GM10248 (cell line): ENCODE measurements at regions of chr17 and their contacts with region 1.

Region 1: DNA sequence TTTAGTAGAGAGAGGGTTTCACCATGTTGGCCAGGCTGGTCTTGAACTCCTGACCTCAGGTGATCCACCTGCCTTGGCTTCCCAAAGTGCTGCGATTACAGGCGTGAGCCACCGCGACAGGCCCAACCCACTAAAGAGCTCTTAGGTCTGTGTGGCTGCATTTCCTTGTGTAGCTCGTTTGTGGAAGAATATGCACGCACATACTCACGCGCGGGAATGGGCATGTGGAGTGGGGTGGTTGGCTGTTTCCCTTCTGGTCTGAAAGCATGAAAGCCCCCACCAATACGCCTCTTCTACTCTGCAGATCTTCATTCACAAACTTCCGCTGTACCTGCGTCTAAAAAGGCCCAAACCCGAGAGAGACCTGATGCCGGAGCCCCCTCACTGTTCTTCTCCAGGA is 10.1 kb downstream of the CHRNB1 start:
- DNase-seq: no peak
- CTCF ChIP-seq: no peak

Region 2: GRCh38 chr17:7435221-7435675 is 19.7 kb before region 1 on chr17 and contains the start of gene TMEM102:
- CTCF ChIA-PET with region 1: interaction called, 43 read pairs
- POLR2A ChIA-PET with region 1: interaction called, 7 read pairs
- DNase-seq: peak; percentile 97
- CTCF ChIP-seq: no peak

Region 3: DNA sequence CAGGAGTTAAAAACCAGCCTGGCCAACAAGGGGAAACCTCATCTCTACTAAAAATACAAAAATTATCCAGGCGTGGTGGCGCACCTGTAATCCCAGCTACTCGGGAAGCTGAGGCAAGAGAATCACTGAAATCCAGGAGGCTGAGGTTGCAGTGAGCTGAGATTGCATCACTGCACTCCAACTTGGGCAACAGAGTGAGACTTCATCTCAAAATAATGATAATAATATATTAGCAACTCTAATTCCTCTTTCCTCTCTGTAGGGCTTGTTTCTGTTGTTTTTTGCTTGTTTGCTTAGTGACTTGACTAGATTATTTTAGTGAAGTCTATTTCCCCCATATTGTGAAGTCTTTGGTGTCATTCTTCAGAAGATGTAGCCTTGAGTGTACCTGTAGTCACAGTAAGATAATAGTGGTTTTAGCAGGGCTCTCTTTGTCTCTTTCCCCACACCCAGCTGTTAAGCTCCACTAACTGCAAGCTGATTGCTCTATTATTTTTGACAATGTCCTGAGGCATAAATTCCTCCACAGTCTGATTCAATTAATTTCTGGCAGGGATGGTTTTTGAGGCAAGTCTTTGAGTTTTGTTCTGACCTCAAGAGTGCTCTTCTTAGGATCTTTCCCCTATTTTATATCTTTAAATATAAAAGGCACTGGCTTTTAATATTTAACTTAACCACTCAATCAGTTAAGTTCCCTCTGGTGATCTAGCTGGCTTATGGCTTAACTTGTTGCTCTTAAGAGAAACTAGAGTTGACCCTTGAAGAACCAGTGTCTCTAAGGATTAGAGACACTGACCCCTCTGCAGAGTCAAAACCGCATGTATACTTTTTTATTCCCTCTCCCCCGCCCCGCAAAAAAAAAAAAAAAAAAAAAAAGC is 75.3 kb after region 1 on chr17:
- CTCF ChIA-PET with region 1: no interaction called
- POLR2A ChIA-PET with region 1: no interaction called
- DNase-seq: no peak
- CTCF ChIP-seq: no peak